Prostate gland (tissue), 2 donors: ENCODE measurements at regions of chr10 and their contacts with region 1.

Region 1: DNA sequence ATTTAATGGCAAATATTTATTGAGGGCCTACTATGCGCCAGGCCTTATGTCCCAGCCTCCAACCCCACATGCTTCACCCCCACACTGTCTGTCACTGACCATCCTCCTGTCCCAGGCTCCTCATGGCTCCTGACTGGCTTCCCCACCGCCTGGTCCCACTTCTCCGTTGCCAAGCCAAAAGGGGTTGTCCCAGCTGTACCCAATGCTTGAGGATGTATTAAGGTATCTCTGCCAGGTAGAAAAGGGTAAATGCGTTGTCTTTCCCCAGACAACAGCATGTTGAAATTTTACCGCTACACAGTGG is 168.8 kb upstream of the FRMD4A start:
- DNase-seq: no peak
- H3K4me3 ChIP-seq: no peak overlapping the region
- H3K27ac ChIP-seq: no peak overlapping the region
- H3K4me1 ChIP-seq: no peaks in the 10 kb centered on the region
- H3K27me3 ChIP-seq: no peaks in the 10 kb centered on the region
- CTCF ChIP-seq: no peak
- POLR2A ChIP-seq: no peak

Region 2: GRCh38 chr10:14543046-14543903 is 43.7 kb after region 1 on chr10:
- intact Hi-C with region 1: loop called (anchors 5 kb)
- DNase-seq: no peak
- H3K4me3 ChIP-seq: no peak overlapping the region
- H3K27ac ChIP-seq: peak overlapping the region in 1 of 2 donors; percentile 26
- H3K4me1 ChIP-seq: peaks cover 12% of the 10 kb centered on the region
- H3K27me3 ChIP-seq: no peaks in the 10 kb centered on the region
- CTCF ChIP-seq: peak in 3 of 4 experiments; percentile 32 to 69 (median 48)
- POLR2A ChIP-seq: no peak

Region 3: GRCh38 chr10:14822879-14823755 is 323.6 kb after region 1 on chr10:
- intact Hi-C with region 1: loop called (anchors 2 kb)
- DNase-seq: no peak
- H3K4me3 ChIP-seq: no peak overlapping the region
- H3K27ac ChIP-seq: no peak overlapping the region
- H3K4me1 ChIP-seq: no peaks in the 10 kb centered on the region
- H3K27me3 ChIP-seq: no peaks in the 10 kb centered on the region
- CTCF ChIP-seq: peak; percentile 11 to 62 (median 50)
- POLR2A ChIP-seq: no peak